ENCODE measurements at regions of chr20 and their contacts with region 1.

Region 1: GRCh38 chr20:32521780-32522525 is 63.2 kb downstream of the NOL4L start:
- DNase-seq: peak; percentile 43 to 75
- H3K4me3 ChIP-seq: no peak overlapping the region
- H3K27ac ChIP-seq: no peak overlapping the region
- H3K4me1 ChIP-seq: peaks cover 0 to 11% of the 10 kb centered on the region in 2 donors
- H3K27me3 ChIP-seq: no peaks in the 10 kb centered on the region
- CTCF ChIP-seq: peak in 2 of 3 donors; percentile 78 to 86
- POLR2A ChIP-seq: no peak

Region 2: DNA sequence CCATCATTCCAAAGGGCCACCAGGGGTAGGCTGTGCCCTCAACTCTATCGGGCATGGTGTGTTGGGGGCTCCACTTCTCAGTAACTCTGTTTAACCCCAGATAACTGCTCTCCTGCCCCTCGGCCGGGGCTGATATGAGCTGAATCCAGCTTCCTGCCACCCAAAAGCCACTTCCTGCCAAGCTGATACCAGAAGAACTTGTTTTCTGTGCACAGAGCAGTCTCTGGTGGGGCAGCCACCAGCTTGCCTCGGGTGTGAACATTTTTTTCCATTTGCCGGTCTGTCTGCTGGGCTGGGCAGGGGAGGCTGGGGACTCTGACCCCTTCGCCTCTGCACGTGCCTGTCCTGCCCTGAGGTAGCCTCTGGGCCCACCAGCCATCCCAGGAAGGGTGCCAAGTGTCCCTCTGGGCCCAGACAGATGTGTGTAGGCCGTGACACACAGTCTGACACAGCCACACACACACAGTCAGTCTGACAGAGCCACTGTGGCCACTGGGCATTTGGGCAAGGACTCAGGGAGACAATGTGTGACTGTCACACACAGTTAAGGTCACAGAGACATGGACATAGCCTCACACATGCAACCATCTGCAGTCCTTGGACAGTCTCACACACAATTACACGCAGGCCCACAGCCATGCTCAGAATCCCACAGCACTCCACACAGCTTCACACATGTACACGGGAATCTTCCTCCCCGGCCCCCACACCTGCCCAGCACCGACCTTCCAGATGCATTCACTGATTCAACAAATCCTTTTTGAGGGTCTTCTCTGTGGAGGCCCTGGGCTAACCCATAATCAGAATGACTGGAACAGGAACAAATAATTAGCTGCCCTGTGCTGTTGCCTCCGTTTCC is 18.1 kb after region 1 on chr20:
- intact Hi-C with region 1: no loop called
- DNase-seq: no peak
- H3K4me3 ChIP-seq: no peak overlapping the region
- H3K27ac ChIP-seq: peak overlapping the region in 1 of 2 donors; percentile 25
- H3K4me1 ChIP-seq: no peaks in the 10 kb centered on the region
- H3K27me3 ChIP-seq: no peaks in the 10 kb centered on the region
- CTCF ChIP-seq: no peak
- POLR2A ChIP-seq: no peak

Region 3: DNA sequence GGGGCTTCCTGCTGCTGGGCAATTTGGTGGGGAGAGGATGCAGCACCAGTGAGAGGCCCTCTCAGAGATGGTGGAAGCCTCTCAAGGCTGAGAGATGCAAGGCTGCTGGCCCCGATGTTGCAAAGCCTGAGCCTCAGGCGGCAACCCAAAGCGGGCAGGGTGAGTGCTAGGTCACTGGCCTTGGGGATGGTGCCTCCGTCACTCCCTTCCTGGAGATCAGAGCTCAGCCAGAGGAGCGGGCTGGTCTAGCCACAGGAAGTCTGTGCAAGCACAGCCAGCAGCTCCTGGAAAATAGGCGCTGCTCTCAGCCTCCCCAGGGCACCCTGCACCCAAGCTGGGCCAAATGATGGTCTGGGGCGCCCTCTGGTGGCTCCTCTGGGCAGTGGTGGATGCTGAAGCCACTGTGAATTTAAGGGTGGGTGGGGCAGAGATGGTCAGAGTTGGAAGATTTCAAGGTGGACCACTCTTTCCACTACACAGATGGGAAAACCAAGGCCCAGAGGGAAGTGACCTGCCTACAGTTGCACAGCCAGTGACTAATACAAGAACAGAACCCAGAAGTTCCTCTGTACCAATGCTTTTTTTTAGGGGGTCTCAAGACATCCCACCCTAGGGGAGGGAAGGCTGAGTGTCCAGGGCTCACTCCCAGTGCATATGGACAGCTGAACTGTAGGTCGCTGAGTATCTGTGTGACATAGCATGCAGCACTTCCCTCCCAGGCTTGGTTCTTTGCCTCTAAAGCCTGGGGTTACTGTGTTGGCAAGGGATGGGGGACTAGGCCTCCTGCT is 131.0 kb after region 1 on chr20:
- intact Hi-C with region 1: loop called (anchors 5 kb)
- DNase-seq: peak; percentile 59 to 83
- H3K4me3 ChIP-seq: no peak overlapping the region
- H3K27ac ChIP-seq: no peak overlapping the region
- H3K4me1 ChIP-seq: no peaks in the 10 kb centered on the region
- H3K27me3 ChIP-seq: no peaks in the 10 kb centered on the region
- CTCF ChIP-seq: peak; percentile 72 to 98 (median 94)
- POLR2A ChIP-seq: no peak